ENCODE measurements at regions of chr9 and their contacts with region 1.

Region 1: DNA sequence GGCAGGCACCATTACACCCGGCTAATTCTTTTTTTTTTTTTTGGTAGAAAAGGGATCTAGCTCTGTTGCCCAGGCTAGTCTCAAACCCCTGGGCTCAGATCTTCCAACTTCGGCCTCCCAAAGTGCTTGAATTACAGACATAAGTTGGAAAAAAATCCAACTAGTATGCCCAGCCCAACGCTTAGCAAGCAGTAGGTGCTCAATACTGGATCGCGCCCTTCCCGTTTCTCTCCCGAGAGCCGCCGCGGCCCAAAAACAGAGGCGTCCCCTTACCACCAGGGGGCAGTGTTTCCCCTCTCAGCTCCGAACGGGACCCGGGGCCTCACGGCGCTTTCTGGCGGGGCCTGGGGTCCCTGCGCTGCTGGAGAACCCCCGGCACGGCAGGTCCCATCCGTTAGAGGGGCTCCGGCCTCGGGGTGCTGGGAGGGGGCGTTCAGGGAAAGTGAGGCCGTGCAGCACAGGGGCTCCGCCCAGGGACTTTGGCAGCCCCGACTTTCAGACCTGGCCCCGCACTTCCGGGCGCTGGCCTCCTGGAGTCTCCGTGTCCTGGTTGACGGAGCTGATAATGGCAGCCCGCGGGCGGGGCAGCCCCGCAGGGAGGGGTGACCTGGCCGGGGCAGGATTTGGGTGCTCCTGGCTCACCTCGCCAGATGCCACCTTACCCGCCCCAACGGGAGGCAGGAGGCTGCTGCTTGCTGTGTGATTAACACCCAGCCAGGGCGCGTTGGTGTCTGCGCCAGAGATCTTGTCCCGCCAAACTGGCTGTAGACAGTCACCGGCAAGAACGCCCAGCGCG is 15.2 kb downstream of the PTGES start:
- DNase-seq: peak; percentile 92
- ATAC-seq: peak; percentile 97
- H3K4me3 ChIP-seq: peak overlapping the region; percentile 61
- H3K27ac ChIP-seq: peak overlapping the region; percentile 79
- H3K4me1 ChIP-seq: peaks cover 4% of the 10 kb centered on the region
- H3K27me3 ChIP-seq: peaks cover 8% of the 10 kb centered on the region
- CTCF ChIP-seq: peak; percentile 99

Region 2: DNA sequence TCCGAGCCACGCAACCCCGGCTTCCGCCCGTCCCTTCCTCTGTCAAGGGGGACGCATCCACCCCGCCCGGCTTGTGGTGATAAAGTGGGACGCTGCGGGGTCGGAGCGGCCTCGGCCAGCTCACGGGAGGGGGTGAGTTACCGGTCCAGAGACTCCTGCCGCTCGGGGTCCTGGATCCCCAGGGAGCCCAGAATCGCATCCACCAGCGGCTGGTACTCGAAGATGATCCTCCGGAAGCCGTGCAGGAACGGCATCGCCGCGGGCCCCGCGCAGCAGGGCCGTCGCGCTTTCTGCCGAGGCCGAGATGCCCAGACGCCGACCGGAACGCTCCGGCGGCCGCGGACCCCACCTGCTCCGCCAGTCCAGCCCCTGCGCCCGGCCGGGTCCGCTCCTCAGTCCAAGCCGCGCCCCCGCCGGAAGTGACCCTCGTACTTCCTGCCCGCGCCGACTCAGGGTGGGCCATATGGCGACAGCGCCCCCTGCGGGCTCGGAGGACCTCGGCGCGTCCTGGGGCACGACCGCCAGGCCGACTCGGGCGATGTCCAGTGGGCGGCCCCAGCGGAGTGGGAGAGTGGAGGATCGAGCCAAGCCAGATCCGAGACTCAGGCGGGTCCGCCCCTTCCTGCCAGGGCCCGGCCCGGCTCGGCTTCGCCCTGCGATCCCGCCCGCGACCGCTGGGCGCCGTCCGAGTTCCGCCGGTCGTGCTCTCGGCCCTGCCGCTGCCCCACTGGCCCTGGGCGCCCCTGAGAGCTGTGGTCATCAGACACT is 95.7 kb before region 1 on chr9 and contains the start of gene ASB6:
- intact Hi-C with region 1: loop called (anchors 10 kb)
- DNase-seq: peak; percentile 99
- ATAC-seq: peak; percentile 97
- H3K4me3 ChIP-seq: peak within 1 kb of the TSS; percentile 98
- H3K27ac ChIP-seq: peak within 1 kb of the TSS; percentile 85
- H3K4me1 ChIP-seq: peaks cover 19% of the 10 kb centered on the region
- H3K27me3 ChIP-seq: no peaks in the 10 kb centered on the region
- CTCF ChIP-seq: peak; percentile 100
- total RNA-seq, gene ASB6: 16.7 TPM

Region 3: GRCh38 chr9:129685220-129685932 is 52.3 kb before region 1 on chr9:
- intact Hi-C with region 1: no loop called
- DNase-seq: no peak
- ATAC-seq: no peak
- H3K4me3 ChIP-seq: no peak overlapping the region
- H3K27ac ChIP-seq: no peak overlapping the region
- H3K4me1 ChIP-seq: no peaks in the 10 kb centered on the region
- H3K27me3 ChIP-seq: peaks cover 4% of the 10 kb centered on the region
- CTCF ChIP-seq: no peak

Region 4: GRCh38 chr9:129785866-129786265 is 48.2 kb after region 1 on chr9:
- intact Hi-C with region 1: loop called (anchors 5 kb)
- DNase-seq: no peak
- ATAC-seq: no peak
- H3K4me3 ChIP-seq: no peak overlapping the region
- H3K27ac ChIP-seq: no peak overlapping the region
- H3K4me1 ChIP-seq: no peaks in the 10 kb centered on the region
- H3K27me3 ChIP-seq: no peaks in the 10 kb centered on the region
- CTCF ChIP-seq: no peak

Measured in upper lobe of right lung (tissue), 1 donor.